ENCODE measurements at regions of chr7 and their contacts with region 1.

Region 1: GRCh38 chr7:75994388-75995051 is at the start of gene TMEM120A:
- DNase-seq: peak; percentile 88 to 90 (median 89)
- H3K4me3 ChIP-seq: peak within 1 kb of the TSS; percentile 61 to 86 (median 86)
- H3K4me3 Mint-ChIP-seq: peak within 1 kb of the TSS; percentile 77 to 84
- H3K27ac ChIP-seq: peak within 1 kb of the TSS in 1 of 2 donors; percentile 78
- H3K27ac Mint-ChIP-seq: peak within 1 kb of the TSS; percentile 64 to 99 (median 95)
- H3K4me1 ChIP-seq: peaks cover 37 to 51% of the 10 kb centered on the region in 2 donors
- H3K4me1 Mint-ChIP-seq: peaks cover 51% of the 10 kb centered on the region
- H3K27me3 ChIP-seq: no peaks in the 10 kb centered on the region
- H3K27me3 Mint-ChIP-seq: peaks cover 0 to 4% (median 0%) of the 10 kb centered on the region in 3 donors
- CTCF ChIP-seq: no peak
- polyA plus RNA-seq, gene TMEM120A: 65.5 to 79.9 (median 76.1) TPM

Region 2: GRCh38 chr7:75951511-75951917 is 43.0 kb before region 1 on chr7:
- intact Hi-C with region 1: loop called in 1 of 2 experiments (anchors 2 kb)
- DNase-seq: peak; percentile 95 to 100 (median 98)
- H3K4me3 ChIP-seq: no peak overlapping the region
- H3K4me3 Mint-ChIP-seq: peak overlapping the region; percentile 27 to 35
- H3K27ac ChIP-seq: peak overlapping the region; percentile 69 to 73
- H3K27ac Mint-ChIP-seq: peak overlapping the region; percentile 85 to 95 (median 91)
- H3K4me1 ChIP-seq: peaks cover 50 to 57% of the 10 kb centered on the region in 2 donors
- H3K4me1 Mint-ChIP-seq: peaks cover 61% of the 10 kb centered on the region
- H3K27me3 ChIP-seq: no peaks in the 10 kb centered on the region
- H3K27me3 Mint-ChIP-seq: peaks cover 0 to 8% (median 4%) of the 10 kb centered on the region in 3 donors
- CTCF ChIP-seq: no peak

Region 3: DNA sequence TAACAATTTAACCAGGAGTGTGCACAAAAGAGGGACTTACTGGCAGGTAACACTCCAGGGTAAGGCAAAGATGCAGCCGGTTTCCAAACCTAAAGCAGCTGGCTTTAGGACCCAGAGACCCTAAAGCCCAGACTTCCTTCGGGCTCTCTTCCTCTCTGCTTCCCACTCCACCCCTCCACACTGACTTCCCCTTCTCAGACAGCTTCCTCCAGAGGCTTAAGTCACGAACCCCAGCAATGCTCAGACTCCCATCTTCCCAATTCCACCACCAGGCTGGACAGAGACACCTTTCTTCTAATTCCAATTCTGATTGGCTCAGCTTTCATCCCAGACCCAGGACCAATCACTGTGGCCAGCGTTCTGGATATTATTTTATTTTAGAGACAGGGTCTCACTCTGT is 28.5 kb after region 1 on chr7:
- intact Hi-C with region 1: no loop called
- DNase-seq: peak; percentile 72 to 75 (median 73)
- H3K4me3 ChIP-seq: peak overlapping the region in 1 of 3 experiments; percentile 52
- H3K4me3 Mint-ChIP-seq: peak overlapping the region; percentile 68 to 84
- H3K27ac ChIP-seq: peak overlapping the region; percentile 9 to 50
- H3K27ac Mint-ChIP-seq: peak overlapping the region; percentile 74 to 92 (median 84)
- H3K4me1 ChIP-seq: peaks cover 16 to 18% of the 10 kb centered on the region in 2 donors
- H3K4me1 Mint-ChIP-seq: peaks cover 17% of the 10 kb centered on the region
- H3K27me3 ChIP-seq: no peaks in the 10 kb centered on the region
- H3K27me3 Mint-ChIP-seq: peaks cover 0 to 2% (median 1%) of the 10 kb centered on the region in 3 donors
- CTCF ChIP-seq: no peak

Measured in CD14-positive monocyte (primary cell).